GM10248 (cell line): ENCODE measurements at regions of chr6 and their contacts with region 1.

Region 1: DNA sequence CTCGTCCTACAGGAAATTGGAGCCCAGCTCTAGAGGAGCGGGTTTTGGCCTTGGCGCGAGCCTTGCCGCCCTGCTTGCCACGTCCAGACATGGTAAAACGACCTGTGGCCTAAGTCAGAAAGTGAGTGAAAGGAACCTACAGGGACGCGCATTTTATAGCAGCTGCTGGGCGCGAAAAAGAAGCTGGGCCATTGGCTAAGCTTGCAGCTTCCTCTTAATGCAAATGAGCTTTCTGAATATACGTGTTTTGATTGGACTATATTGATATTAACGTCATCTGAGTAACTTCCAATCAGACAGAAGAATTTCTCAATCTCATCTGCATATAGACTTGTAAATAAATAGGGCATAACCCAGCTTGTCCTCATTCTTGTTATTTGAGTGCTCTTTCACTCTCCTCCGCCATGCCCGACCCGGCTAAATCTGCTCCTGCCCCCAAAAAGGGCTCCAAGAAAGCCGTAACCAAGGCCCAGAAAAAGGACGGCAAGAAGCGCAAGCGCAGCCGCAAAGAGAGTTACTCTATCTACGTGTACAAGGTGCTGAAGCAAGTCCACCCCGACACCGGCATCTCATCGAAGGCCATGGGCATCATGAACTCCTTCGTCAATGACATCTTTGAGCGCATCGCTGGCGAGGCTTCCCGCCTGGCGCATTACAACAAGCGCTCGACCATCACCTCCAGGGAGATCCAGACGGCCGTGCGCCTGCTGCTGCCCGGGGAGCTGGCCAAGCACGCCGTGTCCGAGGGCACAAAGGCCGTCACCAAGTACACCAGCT is 18.9 kb downstream of the OR2B2 start:
- DNase-seq: peak; percentile 88
- CTCF ChIP-seq: no peak

Region 2: DNA sequence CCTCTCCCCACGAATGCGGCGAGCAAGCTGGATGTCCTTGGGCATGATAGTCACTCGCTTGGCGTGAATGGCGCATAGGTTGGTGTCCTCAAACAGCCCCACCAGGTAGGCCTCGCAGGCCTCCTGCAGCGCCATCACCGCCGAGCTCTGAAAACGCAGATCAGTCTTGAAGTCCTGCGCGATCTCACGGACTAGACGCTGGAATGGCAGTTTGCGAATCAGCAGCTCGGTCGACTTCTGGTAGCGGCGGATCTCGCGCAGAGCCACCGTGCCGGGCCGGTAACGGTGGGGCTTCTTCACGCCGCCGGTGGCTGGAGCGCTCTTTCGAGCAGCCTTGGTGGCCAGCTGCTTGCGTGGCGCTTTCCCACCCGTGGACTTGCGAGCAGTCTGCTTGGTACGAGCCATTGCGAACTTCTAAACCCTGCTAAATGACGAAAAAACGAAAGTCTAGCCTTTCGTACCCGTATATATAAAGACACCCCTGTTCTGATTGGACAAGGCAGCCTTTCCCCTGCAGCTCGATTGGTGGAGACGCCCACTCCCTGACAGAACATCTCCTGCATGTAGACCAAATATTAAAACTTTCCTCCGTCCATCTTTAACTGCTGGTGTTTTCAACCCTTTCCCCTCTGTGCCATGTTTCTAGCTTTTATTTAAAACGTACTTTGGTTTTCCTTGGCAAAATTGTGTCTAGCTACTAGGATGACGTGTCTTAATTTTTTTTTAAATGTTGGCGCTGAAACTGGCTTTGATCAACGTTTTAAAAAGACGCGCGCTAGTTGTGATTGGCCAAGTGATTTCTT is 1696.2 kb before region 1 on chr6:
- CTCF ChIA-PET with region 1: no interaction called
- POLR2A ChIA-PET with region 1: interaction called, 15 read pairs
- DNase-seq: peak; percentile 87
- CTCF ChIP-seq: peak; percentile 11

Region 3: DNA sequence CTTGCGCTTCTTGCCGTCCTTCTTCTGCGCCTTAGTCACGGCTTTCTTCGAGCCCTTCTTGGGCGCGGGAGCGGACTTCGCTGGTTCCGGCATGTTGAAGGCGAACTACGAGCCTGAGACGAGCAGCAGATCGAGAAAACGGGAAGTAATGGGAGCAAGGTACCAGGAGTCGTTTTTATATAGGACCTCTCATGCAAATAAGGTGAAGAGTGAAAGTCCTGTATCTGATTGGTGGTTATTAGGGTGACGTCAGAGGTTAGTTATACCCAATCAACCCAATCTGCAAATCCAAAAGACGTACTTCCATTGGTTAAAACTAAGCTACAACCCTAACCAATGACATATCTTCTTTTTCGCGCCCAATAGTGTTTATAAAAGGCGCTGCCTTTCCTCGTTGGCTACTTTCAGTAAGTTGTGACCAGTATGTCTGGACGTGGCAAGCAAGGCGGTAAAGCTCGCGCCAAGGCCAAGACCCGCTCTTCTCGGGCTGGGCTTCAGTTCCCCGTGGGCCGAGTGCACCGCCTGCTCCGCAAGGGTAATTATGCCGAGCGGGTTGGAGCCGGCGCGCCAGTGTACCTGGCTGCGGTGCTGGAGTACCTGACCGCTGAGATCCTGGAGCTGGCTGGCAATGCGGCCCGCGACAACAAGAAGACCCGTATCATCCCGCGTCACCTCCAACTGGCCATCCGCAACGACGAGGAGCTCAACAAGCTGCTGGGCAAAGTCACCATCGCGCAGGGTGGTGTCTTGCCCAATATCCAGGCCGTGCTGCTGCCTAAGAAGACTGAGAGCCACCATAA is 746.3 kb before region 1 on chr6:
- CTCF ChIA-PET with region 1: interaction called, 4 read pairs
- POLR2A ChIA-PET with region 1: interaction called, 51 read pairs
- DNase-seq: peak; percentile 95
- CTCF ChIP-seq: no peak

Region 4: GRCh38 chr6:27753668-27754407 is 139.4 kb before region 1 on chr6:
- CTCF ChIA-PET with region 1: interaction called, 22 read pairs
- POLR2A ChIA-PET with region 1: interaction called, 12 read pairs
- DNase-seq: peak; percentile 71
- CTCF ChIP-seq: peak; percentile 2

Region 5: DNA sequence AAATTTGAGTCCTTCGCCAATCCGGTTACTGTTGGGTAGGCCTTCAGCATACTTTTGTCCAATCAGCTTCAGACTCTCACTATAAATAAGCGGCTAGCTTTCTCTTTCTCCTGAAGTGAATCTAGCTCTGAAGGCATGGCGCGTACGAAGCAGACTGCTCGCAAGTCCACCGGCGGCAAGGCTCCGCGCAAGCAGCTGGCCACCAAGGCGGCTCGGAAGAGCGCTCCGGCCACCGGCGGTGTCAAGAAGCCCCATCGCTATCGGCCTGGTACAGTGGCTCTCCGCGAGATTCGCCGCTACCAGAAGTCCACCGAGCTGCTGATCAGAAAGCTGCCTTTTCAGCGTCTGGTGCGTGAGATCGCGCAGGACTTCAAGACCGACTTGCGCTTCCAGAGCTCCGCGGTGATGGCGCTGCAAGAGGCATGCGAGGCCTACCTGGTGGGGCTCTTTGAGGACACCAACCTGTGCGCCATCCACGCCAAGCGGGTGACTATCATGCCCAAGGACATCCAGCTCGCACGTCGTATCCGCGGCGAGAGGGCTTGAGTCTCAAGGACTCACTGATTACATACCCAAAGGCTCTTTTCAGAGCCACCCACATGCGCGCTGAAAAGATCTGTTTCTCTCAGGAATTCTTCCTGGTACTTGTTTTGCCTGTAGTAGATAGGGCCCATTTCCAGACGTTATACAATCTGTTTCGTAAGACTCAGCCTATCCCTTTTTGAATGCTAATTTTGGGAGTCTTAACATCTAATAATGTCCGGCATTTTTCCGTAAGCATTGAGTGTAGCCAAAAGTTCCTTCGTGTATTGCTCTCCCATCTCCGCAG is 83.1 kb before region 1 on chr6:
- CTCF ChIA-PET with region 1: interaction called, 101 read pairs
- POLR2A ChIA-PET with region 1: interaction called, 195 read pairs
- DNase-seq: peak; percentile 77
- CTCF ChIP-seq: peak; percentile 21

Region 6: DNA sequence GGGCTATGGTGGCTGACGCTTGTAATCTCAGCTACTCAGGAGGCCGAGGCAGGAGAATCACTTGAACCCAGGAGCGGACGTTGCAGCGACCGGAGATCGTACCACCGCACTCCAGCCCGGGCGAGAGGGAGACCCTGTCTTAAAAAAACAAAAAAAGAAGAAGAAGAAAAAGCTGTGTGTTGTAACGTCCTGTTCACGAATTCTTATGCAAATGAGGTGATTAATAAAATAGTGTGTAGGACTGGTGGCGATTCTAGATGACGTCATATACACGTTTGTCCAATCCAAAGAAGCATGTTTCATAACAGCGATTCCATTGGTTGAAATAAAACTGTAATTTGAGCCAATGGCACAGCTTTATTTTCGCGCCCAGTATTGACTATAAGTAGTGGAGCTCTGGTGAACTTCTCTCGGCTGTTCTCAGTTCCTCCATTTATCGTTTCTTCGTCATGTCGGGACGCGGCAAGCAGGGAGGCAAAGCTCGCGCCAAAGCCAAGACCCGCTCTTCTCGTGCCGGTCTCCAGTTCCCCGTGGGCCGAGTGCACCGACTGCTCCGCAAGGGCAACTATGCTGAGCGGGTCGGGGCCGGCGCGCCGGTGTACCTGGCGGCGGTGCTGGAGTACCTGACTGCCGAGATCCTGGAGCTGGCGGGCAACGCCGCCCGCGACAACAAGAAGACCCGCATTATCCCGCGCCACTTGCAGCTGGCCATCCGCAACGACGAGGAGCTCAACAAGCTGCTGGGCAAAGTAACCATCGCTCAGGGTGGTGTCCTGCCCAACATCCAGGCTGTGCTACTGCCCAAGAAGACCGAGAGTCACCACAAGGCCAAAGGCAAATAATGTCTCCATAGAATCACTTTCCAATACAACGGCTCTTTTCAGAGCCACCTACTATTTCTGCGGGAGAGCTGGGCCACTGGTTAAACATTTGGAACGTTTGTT is 28.1 kb before region 1 on chr6:
- CTCF ChIA-PET with region 1: interaction called, 85 read pairs
- POLR2A ChIA-PET with region 1: interaction called, 240 read pairs
- DNase-seq: peak; percentile 89
- CTCF ChIP-seq: no peak